ENCODE measurements at regions of chr4 and their contacts with region 1.

Region 1: GRCh38 chr4:102500696-102501446 is at the start of gene NFKB1:
- DNase-seq: peak; percentile 60 to 97 (median 78)
- ATAC-seq: peak; percentile 67
- H3K4me3 ChIP-seq: peak within 1 kb of the TSS; percentile 88 to 93
- H3K4me3 Mint-ChIP-seq: peak within 1 kb of the TSS; percentile 95
- H3K27ac ChIP-seq: peak within 1 kb of the TSS; percentile 95 to 100
- H3K27ac Mint-ChIP-seq: peak within 1 kb of the TSS; percentile 98
- H3K4me1 ChIP-seq: peaks cover 19% of the 10 kb centered on the region
- H3K4me1 Mint-ChIP-seq: peaks cover 29% of the 10 kb centered on the region
- H3K27me3 ChIP-seq: no peaks in the 10 kb centered on the region
- H3K27me3 Mint-ChIP-seq: no peaks in the 10 kb centered on the region
- CTCF ChIP-seq: no peak
- total RNA-seq, gene NFKB1: 278 to 289 TPM

Region 2: DNA sequence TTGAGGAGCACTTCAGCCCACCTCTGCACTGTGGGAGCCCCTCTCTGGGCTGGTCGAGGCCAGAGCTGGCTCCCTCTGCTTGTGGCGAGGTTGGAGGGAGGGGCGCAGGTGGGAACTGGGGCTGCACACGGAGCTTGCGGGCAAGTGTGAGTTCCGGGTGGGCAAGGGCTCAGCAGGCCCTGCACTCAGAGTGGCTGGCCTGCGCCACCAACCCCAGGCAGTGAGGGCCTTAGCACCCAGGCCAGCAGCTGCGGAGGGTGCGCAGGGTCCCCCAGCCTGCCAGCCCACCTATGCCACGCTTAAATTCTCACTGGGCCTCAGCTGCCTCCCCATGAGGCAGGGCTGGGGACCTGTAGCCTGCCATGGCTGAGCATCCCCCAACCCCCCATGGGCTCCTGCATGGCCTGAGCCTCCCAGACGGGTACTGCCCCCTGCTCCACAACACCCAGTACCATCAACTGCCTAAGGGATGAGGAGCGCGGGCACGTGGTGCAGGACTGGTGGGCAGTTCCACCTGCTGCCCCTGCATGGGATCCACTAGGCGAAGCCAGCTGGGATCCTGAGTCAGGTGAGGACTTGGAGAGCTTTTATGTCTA is 266.5 kb before region 1 on chr4:
- CTCF ChIA-PET with region 1: no interaction called
- POLR2A ChIA-PET with region 1: no interaction called
- intact Hi-C with region 1: no loop called
- DNase-seq: no peak
- ATAC-seq: no peak
- H3K4me3 ChIP-seq: no peak overlapping the region
- H3K4me3 Mint-ChIP-seq: no peak overlapping the region
- H3K27ac ChIP-seq: no peak overlapping the region
- H3K27ac Mint-ChIP-seq: no peak overlapping the region
- H3K4me1 ChIP-seq: no peaks in the 10 kb centered on the region
- H3K4me1 Mint-ChIP-seq: no peaks in the 10 kb centered on the region
- H3K27me3 ChIP-seq: no peaks in the 10 kb centered on the region
- H3K27me3 Mint-ChIP-seq: no peaks in the 10 kb centered on the region
- CTCF ChIP-seq: no peak

Region 3: DNA sequence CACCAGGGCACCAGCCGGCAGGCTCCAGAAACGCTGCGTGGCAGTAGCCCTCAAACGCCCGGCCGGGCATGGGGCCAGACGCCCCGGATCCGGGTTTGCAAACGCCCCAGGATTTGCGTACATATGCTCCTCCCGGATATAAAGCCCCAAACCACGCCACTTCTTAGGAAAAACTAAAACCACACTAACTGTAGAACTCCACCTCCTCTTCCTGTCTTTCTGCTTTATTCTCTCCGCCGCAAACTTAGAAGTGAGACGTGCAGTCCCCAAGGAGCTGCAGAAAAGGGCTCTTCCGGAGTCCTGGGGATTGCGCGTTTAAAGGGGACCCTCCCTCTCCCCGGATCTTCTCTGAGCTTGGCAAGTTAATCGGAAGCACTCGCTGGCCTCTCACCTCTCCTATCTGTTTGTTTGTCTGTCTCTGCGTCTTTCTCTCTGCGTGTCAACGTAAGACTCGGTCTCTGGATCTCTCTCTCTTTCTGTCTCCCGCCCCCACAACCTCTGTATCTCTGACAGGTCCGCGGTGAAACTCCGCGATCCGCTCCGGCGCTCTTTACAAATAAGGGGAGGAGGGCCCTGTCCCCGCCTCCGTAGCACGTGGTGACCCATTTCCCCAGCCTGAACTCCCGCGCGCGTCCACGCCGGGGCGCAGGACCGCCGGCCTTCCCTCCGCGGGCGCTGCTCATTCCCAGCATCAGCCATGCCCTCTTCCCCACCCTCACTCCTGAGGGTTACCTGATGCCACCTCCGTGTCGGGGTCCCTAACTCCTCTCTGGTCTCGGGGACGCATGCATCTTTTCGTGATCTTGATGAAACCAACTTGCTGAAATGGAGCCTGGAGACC is 155.7 kb before region 1 on chr4 and contains the start of gene SLC39A8:
- CTCF ChIA-PET with region 1: no interaction called
- POLR2A ChIA-PET with region 1: no interaction called
- intact Hi-C with region 1: loop called in 1 of 2 experiments (anchors 5 kb)
- DNase-seq: peak; percentile 67 to 94 (median 84)
- ATAC-seq: peak; percentile 80
- H3K4me3 ChIP-seq: peak within 1 kb of the TSS; percentile 65 to 85
- H3K4me3 Mint-ChIP-seq: peak within 1 kb of the TSS; percentile 92
- H3K27ac ChIP-seq: peak within 1 kb of the TSS; percentile 92 to 96
- H3K27ac Mint-ChIP-seq: peak within 1 kb of the TSS; percentile 96
- H3K4me1 ChIP-seq: peaks cover 33% of the 10 kb centered on the region
- H3K4me1 Mint-ChIP-seq: peaks cover 54% of the 10 kb centered on the region
- H3K27me3 ChIP-seq: no peaks in the 10 kb centered on the region
- H3K27me3 Mint-ChIP-seq: no peaks in the 10 kb centered on the region
- CTCF ChIP-seq: peak; percentile 90
- total RNA-seq, gene SLC39A8: 19.1 to 20.0 TPM

Region 4: DNA sequence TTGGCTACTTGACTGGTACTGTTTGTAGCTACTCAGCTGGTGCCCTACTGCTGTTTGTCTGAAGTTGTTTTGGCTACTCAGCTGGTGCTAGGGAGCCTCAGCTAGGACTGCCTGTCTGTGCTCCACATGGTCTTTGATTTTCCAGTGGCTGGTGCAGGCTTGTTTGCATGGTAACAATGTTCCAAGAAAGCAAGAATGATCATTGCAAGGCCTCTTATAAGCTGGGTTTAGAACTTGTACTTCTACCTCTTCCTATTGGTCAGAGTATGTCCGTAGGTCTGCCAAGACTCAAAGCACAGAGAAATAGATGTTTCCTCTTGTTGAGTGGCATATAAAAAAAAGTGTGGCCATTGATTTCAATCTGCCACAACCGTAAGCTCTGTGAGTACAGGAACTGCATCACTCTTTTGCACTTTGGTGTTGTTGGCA is 17.8 kb after region 1 on chr4:
- CTCF ChIA-PET with region 1: interaction called, 4 read pairs
- POLR2A ChIA-PET with region 1: interaction called, 6 read pairs
- intact Hi-C with region 1: loop called (anchors 1 kb)
- DNase-seq: peak in 4 of 9 experiments; percentile 18 to 77 (median 46)
- ATAC-seq: peak; percentile 77
- H3K4me3 ChIP-seq: peak overlapping the region in 1 of 2 experiments; percentile 10
- H3K4me3 Mint-ChIP-seq: peak overlapping the region; percentile 46
- H3K27ac ChIP-seq: peak overlapping the region; percentile 28 to 51
- H3K27ac Mint-ChIP-seq: peak overlapping the region; percentile 89
- H3K4me1 ChIP-seq: peaks cover 55% of the 10 kb centered on the region
- H3K4me1 Mint-ChIP-seq: peaks cover 75% of the 10 kb centered on the region
- H3K27me3 ChIP-seq: no peaks in the 10 kb centered on the region
- H3K27me3 Mint-ChIP-seq: no peaks in the 10 kb centered on the region
- CTCF ChIP-seq: no peak

Region 5: DNA sequence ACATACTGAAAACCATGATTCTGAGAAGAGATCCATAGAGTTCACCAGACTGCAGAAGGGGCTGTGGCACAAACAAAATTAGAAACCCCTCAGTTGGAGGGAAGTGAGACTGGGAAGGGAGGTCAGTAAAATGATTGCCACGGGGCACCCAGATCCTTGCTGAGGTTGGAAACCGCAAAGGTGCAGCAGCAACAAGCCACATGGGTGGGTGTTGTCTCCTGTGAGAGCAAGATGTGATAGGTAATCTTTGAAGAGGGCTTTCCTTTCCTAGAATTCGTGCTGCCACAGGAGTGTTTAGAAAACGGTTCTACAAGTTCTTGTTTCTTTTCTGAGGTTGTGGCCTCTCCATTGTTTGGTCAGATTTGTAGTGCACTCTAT is 85.8 kb after region 1 on chr4:
- CTCF ChIA-PET with region 1: interaction called, 3 read pairs
- POLR2A ChIA-PET with region 1: no interaction called
- intact Hi-C with region 1: loop called in 1 of 2 experiments (anchors 5 kb)
- DNase-seq: peak in 5 of 9 experiments; percentile 7 to 62 (median 47)
- ATAC-seq: peak; percentile 62
- H3K4me3 ChIP-seq: peak overlapping the region in 1 of 2 experiments; percentile 6
- H3K4me3 Mint-ChIP-seq: peak overlapping the region; percentile 30
- H3K27ac ChIP-seq: peak overlapping the region; percentile 2 to 52
- H3K27ac Mint-ChIP-seq: peak overlapping the region; percentile 83
- H3K4me1 ChIP-seq: peaks cover 68% of the 10 kb centered on the region
- H3K4me1 Mint-ChIP-seq: peaks cover 67% of the 10 kb centered on the region
- H3K27me3 ChIP-seq: no peaks in the 10 kb centered on the region
- H3K27me3 Mint-ChIP-seq: no peaks in the 10 kb centered on the region
- CTCF ChIP-seq: no peak

Region 6: DNA sequence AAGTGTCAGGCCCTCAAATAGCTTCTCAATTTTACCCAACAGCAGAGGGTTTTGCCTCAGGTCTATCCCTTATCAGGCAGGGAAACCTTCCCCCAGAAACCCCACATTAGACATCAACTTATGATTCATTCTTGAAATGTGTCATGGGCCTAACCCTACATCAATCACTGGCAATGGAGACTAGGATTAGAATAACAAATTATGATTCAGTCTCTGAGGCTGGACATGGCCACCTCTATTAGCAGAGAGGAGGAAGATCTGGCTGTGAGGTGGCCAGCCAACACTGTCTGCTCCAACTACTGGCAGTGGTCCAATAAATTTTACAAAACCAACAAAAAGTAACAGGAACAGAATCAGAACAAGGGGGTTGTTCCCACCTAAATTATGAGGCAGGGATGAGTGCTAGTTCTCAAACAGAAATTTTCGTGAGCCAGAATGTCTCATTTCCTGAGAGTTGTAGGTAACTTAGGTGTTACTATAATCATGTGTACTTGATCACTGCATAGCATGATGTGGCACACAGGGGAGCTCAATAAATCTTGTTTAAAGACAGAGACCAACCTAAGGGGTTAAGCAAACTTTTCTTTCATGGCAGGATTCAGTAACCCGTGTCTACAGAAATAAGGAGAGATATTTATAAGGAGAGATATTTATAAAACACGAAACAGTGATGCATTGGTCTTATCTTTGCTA is 127.1 kb after region 1 on chr4:
- CTCF ChIA-PET with region 1: no interaction called
- POLR2A ChIA-PET with region 1: interaction called, 3 read pairs
- intact Hi-C with region 1: loop called in 1 of 2 experiments (anchors 2 kb)
- DNase-seq: no peak
- ATAC-seq: no peak
- H3K4me3 ChIP-seq: no peak overlapping the region
- H3K4me3 Mint-ChIP-seq: no peak overlapping the region
- H3K27ac ChIP-seq: no peak overlapping the region
- H3K27ac Mint-ChIP-seq: peak overlapping the region; percentile 74
- H3K4me1 ChIP-seq: peaks cover 64% of the 10 kb centered on the region
- H3K4me1 Mint-ChIP-seq: peaks cover 77% of the 10 kb centered on the region
- H3K27me3 ChIP-seq: no peaks in the 10 kb centered on the region
- H3K27me3 Mint-ChIP-seq: no peaks in the 10 kb centered on the region
- CTCF ChIP-seq: no peak

Region 7: GRCh38 chr4:103019308-103020124 is 518.6 kb after region 1 on chr4 and contains the start of gene SLC9B1:
- CTCF ChIA-PET with region 1: no interaction called
- POLR2A ChIA-PET with region 1: no interaction called
- intact Hi-C with region 1: loop called (anchors 2 kb)
- DNase-seq: peak; percentile 86 to 96 (median 94)
- ATAC-seq: peak; percentile 92
- H3K4me3 ChIP-seq: peak within 1 kb of the TSS; percentile 70 to 75
- H3K4me3 Mint-ChIP-seq: peak within 1 kb of the TSS; percentile 87
- H3K27ac ChIP-seq: peak within 1 kb of the TSS; percentile 86 to 87
- H3K27ac Mint-ChIP-seq: peak within 1 kb of the TSS; percentile 97
- H3K4me1 ChIP-seq: peaks cover 17% of the 10 kb centered on the region
- H3K4me1 Mint-ChIP-seq: peaks cover 20% of the 10 kb centered on the region
- H3K27me3 ChIP-seq: no peaks in the 10 kb centered on the region
- H3K27me3 Mint-ChIP-seq: no peaks in the 10 kb centered on the region
- CTCF ChIP-seq: no peak
- total RNA-seq, gene SLC9B1: 1.7 to 4.0 TPM

Region 8: GRCh38 chr4:103493446-103494179 is 992.7 kb after region 1 on chr4:
- CTCF ChIA-PET with region 1: no interaction called
- POLR2A ChIA-PET with region 1: no interaction called
- intact Hi-C with region 1: no loop called
- DNase-seq: no peak
- ATAC-seq: no peak
- H3K4me3 ChIP-seq: no peak overlapping the region
- H3K4me3 Mint-ChIP-seq: no peak overlapping the region
- H3K27ac ChIP-seq: no peak overlapping the region
- H3K27ac Mint-ChIP-seq: no peak overlapping the region
- H3K4me1 ChIP-seq: no peaks in the 10 kb centered on the region
- H3K4me1 Mint-ChIP-seq: no peaks in the 10 kb centered on the region
- H3K27me3 ChIP-seq: no peaks in the 10 kb centered on the region
- H3K27me3 Mint-ChIP-seq: no peaks in the 10 kb centered on the region
- CTCF ChIP-seq: no peak